ENCODE measurements at regions of chr14 and their contacts with region 1.

Region 1: GRCh38 chr14:52299692-52300278 is 14.3 kb upstream of the PTGER2 start:
- DNase-seq: no peak
- ATAC-seq: peak; percentile 68 to 79
- H3K4me3 ChIP-seq: no peak overlapping the region
- H3K27ac ChIP-seq: no peak overlapping the region
- H3K4me1 ChIP-seq: no peaks in the 10 kb centered on the region
- H3K27me3 ChIP-seq: no peaks in the 10 kb centered on the region
- CTCF ChIP-seq: peak; percentile 74

Region 2: DNA sequence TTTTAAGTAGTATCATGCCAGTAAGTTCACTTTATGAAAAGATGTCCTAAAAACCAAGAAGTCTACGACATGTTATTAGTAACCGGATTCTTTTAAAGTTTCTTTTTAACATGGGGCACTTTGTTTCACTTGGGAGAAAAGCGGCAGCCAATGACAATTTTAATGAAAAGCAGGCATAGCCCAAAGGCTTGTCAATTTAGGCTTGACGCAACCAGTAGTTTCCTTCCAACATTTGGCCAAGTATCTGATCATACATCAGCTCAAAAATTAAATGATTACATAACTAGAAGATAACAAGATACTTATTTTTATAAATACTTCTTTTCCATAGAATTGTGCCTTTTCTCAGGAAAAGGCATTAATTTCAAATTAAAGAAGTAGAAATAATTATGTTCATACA is 139.7 kb after region 1 on chr14:
- intact Hi-C with region 1: no loop called
- DNase-seq: no peak
- ATAC-seq: no peak
- H3K4me3 ChIP-seq: no peak overlapping the region
- H3K27ac ChIP-seq: no peak overlapping the region
- H3K4me1 ChIP-seq: no peaks in the 10 kb centered on the region
- H3K27me3 ChIP-seq: no peaks in the 10 kb centered on the region
- CTCF ChIP-seq: no peak

Region 3: GRCh38 chr14:52473557-52473956 is 173.8 kb after region 1 on chr14:
- intact Hi-C with region 1: loop called (anchors 5 kb)
- DNase-seq: no peak
- ATAC-seq: peak in 1 of 2 donors; percentile 55
- H3K4me3 ChIP-seq: no peak overlapping the region
- H3K27ac ChIP-seq: no peak overlapping the region
- H3K4me1 ChIP-seq: no peaks in the 10 kb centered on the region
- H3K27me3 ChIP-seq: no peaks in the 10 kb centered on the region
- CTCF ChIP-seq: peak; percentile 41

Measured in lower lobe of right lung (tissue), 2 donors.